Aorta (tissue), 5 donors: ENCODE measurements at regions of chr4 and their contacts with region 1.

Region 1: DNA sequence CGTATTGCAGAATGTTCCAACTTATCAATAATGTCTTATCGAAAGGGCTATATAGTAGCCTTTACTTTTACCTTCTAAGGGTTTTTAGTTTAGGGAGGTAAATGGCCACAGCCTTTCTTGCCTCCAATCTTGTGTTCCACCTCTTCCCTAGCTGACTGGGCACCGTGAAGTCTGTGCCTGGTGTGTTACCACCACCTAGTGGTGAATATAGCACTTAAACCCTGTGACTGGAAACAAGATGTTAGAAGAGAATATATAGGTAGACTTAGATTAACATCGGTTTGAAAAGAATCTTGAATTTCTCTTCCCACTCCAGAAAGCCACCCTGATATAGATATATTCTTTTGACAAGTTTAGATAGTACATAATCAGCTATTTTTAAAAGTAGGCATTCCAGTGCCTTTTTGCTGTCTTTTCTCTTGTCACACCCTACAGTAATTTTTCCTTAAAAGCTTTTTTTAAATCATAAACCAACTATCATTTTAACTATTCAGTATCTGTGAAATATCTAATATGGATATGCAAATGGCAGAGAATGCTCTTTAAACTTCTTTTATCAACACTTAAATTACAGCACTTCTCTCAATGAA is 27.8 kb upstream of the ADH7 start:
- DNase-seq: peak in 1 of 2 donors; percentile 59
- ATAC-seq: peak; percentile 90
- H3K4me3 ChIP-seq: no peak overlapping the region
- H3K27ac ChIP-seq: no peak overlapping the region
- H3K4me1 ChIP-seq: no peaks in the 10 kb centered on the region
- H3K27me3 ChIP-seq: no peaks in the 10 kb centered on the region

Region 2: GRCh38 chr4:98467627-98468072 is 995.3 kb before region 1 on chr4:
- intact Hi-C with region 1: loop called (anchors 5 to 10 kb)
- DNase-seq: peak in 1 of 2 donors; percentile 81
- ATAC-seq: peak; percentile 90
- H3K4me3 ChIP-seq: no peak overlapping the region
- H3K27ac ChIP-seq: no peak overlapping the region
- H3K4me1 ChIP-seq: no peaks in the 10 kb centered on the region
- H3K27me3 ChIP-seq: peaks cover 0 to 2% of the 10 kb centered on the region in 2 donors

Region 3: DNA sequence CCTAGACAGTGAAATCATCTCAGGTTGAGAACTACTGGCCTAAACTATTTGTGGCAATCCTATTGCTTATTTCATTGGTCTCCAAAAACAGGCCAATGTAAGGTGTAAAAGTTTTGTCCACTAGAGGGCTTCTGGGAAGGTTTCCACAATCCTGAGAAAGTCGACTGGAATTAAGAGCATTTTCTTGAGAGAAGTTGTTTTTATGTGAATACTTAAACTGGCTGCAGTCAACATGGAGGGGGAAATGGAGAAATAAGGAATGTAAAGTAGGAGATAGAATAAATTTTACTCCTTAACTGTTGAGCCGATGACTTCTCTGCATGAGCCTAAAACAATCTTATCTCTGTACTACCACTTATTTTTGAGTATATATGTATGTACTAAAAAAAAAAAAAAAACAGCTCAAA is 523.1 kb before region 1 on chr4:
- intact Hi-C with region 1: loop called in 1 of 2 experiments (anchors 10 kb)
- DNase-seq: no peak
- ATAC-seq: peak; percentile 67
- H3K4me3 ChIP-seq: no peak overlapping the region
- H3K27ac ChIP-seq: no peak overlapping the region
- H3K4me1 ChIP-seq: no peaks in the 10 kb centered on the region
- H3K27me3 ChIP-seq: no peaks in the 10 kb centered on the region

Region 4: DNA sequence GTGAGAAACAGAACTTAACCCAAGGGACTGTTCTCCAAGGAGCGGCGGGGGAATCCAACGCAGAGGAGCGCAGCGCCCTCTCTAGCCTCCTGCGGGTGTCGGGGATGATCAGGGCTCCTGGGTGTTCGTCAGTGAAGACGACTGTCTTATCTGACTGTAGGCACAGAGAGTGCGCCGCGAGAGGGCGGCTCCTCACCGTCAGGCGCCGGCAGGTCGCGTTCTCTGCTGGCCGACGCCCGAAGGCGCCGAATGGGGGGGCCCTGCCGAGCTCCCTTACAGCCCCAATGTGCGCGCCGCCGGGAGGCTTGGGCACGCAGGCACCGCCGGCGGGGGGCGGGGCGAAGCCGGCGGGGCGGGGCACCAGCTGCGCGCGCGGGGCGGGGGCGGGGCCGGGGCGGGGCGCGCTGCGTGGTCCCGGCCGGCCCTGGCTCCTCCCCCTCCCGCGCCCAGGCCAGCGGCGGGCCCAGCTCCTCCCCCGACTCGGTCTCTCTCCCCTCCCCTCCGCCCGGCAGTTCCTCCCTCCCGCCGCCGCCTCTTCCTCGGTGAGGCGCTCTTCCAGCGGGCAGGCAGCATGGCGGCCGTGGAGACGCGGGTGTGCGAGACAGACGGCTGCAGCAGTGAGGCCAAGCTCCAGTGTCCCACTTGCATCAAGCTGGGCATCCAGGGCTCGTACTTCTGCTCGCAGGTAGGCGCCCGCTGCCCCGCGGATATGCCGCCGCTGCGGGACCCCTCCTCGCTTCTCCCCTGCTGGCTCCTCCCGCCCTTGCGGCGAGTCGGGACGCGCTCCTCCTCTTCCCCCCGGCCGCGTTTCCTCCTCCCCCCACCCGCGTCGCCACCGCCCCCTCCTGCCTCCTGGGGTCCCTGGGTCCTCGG is 467.6 kb before region 1 on chr4 and contains the start of gene METAP1:
- intact Hi-C with region 1: loop called in 1 of 2 experiments (anchors 5 kb)
- DNase-seq: peak; percentile 95 to 96
- ATAC-seq: peak; percentile 98
- H3K4me3 ChIP-seq: peak within 1 kb of the TSS; percentile 97 to 99
- H3K27ac ChIP-seq: peak within 1 kb of the TSS; percentile 76 to 81
- H3K4me1 ChIP-seq: no peaks in the 10 kb centered on the region
- H3K27me3 ChIP-seq: no peaks in the 10 kb centered on the region
- total RNA-seq, gene METAP1: 57.2 to 61.4 TPM

Region 5: DNA sequence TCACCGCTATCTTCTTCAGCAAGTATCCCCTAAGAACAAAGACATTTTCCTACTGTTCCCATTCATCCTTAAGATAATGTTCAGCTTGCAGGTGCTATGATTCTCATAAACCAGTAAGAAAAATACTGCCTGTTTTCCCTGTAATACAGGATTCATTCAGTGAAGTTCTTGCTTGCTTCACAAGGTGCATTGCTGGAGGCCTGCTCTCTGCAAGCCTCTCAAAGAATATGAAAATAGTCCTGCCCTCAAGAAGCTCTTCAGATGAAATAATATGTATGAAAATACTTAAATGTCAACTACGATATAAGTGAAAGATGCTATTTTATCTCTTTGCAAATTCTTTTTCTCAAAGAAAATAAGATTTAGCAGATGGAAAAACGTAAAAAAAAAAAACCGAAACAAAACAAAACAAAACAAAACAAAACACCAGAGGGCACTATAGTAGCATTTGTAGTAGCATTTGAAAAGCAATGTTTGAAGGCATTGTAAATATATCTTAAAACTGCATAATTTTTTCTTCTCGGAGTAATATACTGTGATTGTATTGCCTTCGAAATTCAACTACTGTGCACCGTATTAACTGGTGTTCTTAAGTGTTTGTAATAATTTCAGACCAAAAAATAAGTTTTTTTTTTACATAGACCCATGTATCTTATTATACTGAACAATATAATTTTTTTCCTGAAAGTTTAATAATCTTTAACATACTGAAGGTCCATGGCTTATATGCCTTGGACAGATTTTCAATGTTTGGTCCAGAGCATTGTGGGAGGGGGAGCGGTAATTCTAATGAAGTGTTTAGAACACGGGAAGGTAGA is 344.9 kb before region 1 on chr4:
- intact Hi-C with region 1: loop called (anchors 2 to 5 kb)
- DNase-seq: no peak
- ATAC-seq: peak; percentile 67
- H3K4me3 ChIP-seq: no peak overlapping the region
- H3K27ac ChIP-seq: no peak overlapping the region
- H3K4me1 ChIP-seq: no peaks in the 10 kb centered on the region
- H3K27me3 ChIP-seq: no peaks in the 10 kb centered on the region

Region 6: GRCh38 chr4:99159699-99160098 is 303.3 kb before region 1 on chr4:
- intact Hi-C with region 1: no loop called
- DNase-seq: no peak
- ATAC-seq: no peak
- H3K4me3 ChIP-seq: no peak overlapping the region
- H3K27ac ChIP-seq: no peak overlapping the region
- H3K4me1 ChIP-seq: no peaks in the 10 kb centered on the region
- H3K27me3 ChIP-seq: no peaks in the 10 kb centered on the region

Region 7: GRCh38 chr4:99593781-99594636 is 131.0 kb after region 1 on chr4:
- intact Hi-C with region 1: no loop called
- DNase-seq: no peak
- ATAC-seq: no peak
- H3K4me3 ChIP-seq: no peak overlapping the region
- H3K27ac ChIP-seq: no peak overlapping the region
- H3K4me1 ChIP-seq: no peaks in the 10 kb centered on the region
- H3K27me3 ChIP-seq: no peaks in the 10 kb centered on the region